ENCODE measurements at regions of chr7 and their contacts with region 1.

Region 1: GRCh38 chr7:130695840-130696239 is 9.5 kb upstream of the TSGA13 start:
- DNase-seq: peak; percentile 36 to 62 (median 50)
- ATAC-seq: peak; percentile 80
- H3K4me3 ChIP-seq: no peak overlapping the region
- H3K27ac ChIP-seq: no peak overlapping the region
- H3K4me1 ChIP-seq: no peaks in the 10 kb centered on the region
- H3K27me3 ChIP-seq: peaks cover 0 to 4% of the 10 kb centered on the region in 2 experiments; a peak in 2 of 5 replicates
- CTCF ChIP-seq: peak; percentile 76 to 99 (median 99)
- EP300 ChIP-seq: no peak
- POLR2A ChIP-seq: no peak
- RAD21 ChIP-seq: peak; percentile 61 to 77

Region 2: DNA sequence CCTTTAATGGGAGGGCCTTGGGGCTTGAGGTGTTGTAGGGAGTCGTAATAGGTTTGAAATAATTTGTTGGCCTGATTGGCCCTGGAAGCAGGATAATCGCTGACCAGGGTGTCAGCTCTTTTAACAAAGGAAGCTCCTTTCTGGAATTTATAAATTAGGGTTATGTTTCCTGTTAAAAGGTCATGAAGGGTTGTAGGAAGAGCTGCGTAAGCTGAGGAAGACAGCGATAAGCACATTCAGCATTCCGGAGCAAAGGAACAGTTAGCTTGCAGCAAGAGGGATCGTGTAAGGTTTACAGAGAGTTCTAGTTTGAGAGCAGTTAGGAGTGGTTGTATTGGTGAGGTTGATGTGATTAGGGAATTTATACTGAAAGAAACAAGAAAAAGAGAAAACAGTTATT is 381.5 kb before region 1 on chr7:
- CTCF ChIA-PET with region 1: no interaction called
- POLR2A ChIA-PET with region 1: no interaction called
- in situ Hi-C with region 1: no loop called
- intact Hi-C with region 1: no loop called
- DNase-seq: no peak
- ATAC-seq: no peak
- H3K4me3 ChIP-seq: no peak overlapping the region
- H3K27ac ChIP-seq: no peak overlapping the region
- H3K4me1 ChIP-seq: no peaks in the 10 kb centered on the region
- H3K27me3 ChIP-seq: peaks cover 55 to 65% of the 10 kb centered on the region in 2 experiments; a peak in 4 of 5 replicates
- CTCF ChIP-seq: no peak
- EP300 ChIP-seq: no peak
- POLR2A ChIP-seq: no peak
- RAD21 ChIP-seq: no peak

Region 3: DNA sequence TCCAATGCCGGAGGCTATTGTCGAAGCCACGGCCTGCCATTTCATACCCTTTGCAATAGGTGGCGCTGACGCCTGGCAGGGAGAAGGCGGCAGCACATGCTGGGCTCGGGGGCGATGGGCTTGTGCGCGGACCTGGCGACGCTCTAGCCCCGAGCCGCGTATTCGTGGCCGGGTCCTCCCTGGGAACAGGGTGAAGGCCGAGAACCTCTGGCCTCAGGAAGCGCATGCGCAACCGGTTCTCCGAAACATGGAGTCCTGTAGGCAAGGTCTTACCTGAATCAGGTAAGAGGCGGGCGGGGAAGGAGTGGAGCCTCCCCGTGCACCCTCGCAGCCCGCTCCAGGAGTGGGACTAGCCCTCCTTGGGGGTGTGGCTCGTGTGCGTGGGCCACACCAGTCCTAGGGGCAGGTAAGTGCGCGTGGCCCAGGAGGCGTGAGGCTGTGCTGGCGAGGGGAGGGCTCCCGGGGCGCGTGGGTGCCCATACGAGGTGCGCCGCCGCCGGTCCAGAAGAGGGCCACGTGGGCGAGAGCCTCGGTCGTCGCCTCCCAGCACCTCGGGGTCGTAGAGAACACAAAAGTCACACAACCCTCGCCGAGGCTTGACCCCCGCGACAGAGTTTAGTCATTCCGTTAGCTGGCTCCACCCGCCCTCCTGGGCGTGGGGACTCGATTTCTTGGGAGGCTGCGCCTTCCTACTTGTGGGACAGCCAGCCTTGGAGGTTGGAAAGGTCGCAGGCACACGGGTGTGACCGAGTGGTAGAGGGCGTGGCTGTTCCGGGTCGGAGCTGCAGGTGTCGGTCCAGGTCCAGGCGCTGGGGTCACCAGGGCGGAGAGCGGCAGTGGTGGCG is 209.5 kb before region 1 on chr7:
- CTCF ChIA-PET with region 1: no interaction called
- POLR2A ChIA-PET with region 1: no interaction called
- in situ Hi-C with region 1: no loop called
- intact Hi-C with region 1: loop called (anchors 10 kb)
- DNase-seq: peak; percentile 31 to 58 (median 46)
- ATAC-seq: peak; percentile 81
- H3K4me3 ChIP-seq: no peak overlapping the region
- H3K27ac ChIP-seq: no peak overlapping the region
- H3K4me1 ChIP-seq: peaks cover 0 to 13% of the 10 kb centered on the region in 2 experiments; a peak in 3 of 5 replicates
- H3K27me3 ChIP-seq: peaks cover 17 to 52% of the 10 kb centered on the region in 2 experiments; a peak in 4 of 5 replicates
- CTCF ChIP-seq: peak; percentile 73 to 85 (median 80)
- EP300 ChIP-seq: no peak
- POLR2A ChIP-seq: no peak
- RAD21 ChIP-seq: peak; percentile 28 to 73; a peak in 3 of 4 replicates

Region 4: DNA sequence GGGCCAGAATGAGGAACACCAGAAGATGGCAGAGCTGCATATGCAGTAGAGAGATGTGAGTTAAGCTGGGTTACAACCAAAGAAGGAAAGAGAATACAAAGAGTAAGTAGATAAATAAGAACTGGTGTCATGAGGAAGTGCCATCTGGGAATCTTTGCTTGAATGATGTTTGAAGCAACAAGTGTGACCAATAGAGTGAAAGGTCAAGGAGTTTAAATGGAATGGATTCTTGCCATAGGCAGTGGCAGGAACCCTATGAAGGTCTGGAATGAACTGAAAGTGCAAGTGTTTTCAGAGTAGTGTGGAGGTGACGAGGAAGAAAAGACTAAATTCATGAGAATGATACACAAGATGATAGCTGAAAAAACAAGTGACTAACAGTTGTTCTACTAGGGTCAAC is 182.4 kb before region 1 on chr7:
- CTCF ChIA-PET with region 1: no interaction called
- POLR2A ChIA-PET with region 1: no interaction called
- in situ Hi-C with region 1: no loop called
- intact Hi-C with region 1: no loop called
- DNase-seq: no peak
- ATAC-seq: no peak
- H3K4me3 ChIP-seq: no peak overlapping the region
- H3K27ac ChIP-seq: no peak overlapping the region
- H3K4me1 ChIP-seq: no peaks in the 10 kb centered on the region
- H3K27me3 ChIP-seq: no peaks in the 10 kb centered on the region
- CTCF ChIP-seq: no peak
- EP300 ChIP-seq: no peak
- POLR2A ChIP-seq: no peak
- RAD21 ChIP-seq: no peak

Region 5: GRCh38 chr7:130758429-130759056 is 62.7 kb after region 1 on chr7:
- CTCF ChIA-PET with region 1: no interaction called
- POLR2A ChIA-PET with region 1: no interaction called
- in situ Hi-C with region 1: no loop called
- intact Hi-C with region 1: loop called (anchors 2 kb)
- DNase-seq: peak; percentile 60 to 73 (median 64)
- ATAC-seq: peak; percentile 75
- H3K4me3 ChIP-seq: no peak overlapping the region
- H3K27ac ChIP-seq: no peak overlapping the region
- H3K4me1 ChIP-seq: no peaks in the 10 kb centered on the region
- H3K27me3 ChIP-seq: peaks cover 8 to 18% of the 10 kb centered on the region in 2 experiments
- CTCF ChIP-seq: peak in 2 of 3 experiments; percentile 65 to 95; a peak in 4 of 6 replicates
- EP300 ChIP-seq: no peak
- POLR2A ChIP-seq: no peak
- RAD21 ChIP-seq: peak; percentile 83 to 90